Lower leg skin (tissue), 4 donors: ENCODE measurements at regions of chr11 and their contacts with region 1.

Region 1: GRCh38 chr11:23976841-23977271 is 520.0 kb upstream of the LUZP2 start:
- DNase-seq: no peak
- H3K4me3 ChIP-seq: no peak overlapping the region
- CTCF ChIP-seq: no peak
- POLR2A ChIP-seq: no peak

Region 2: DNA sequence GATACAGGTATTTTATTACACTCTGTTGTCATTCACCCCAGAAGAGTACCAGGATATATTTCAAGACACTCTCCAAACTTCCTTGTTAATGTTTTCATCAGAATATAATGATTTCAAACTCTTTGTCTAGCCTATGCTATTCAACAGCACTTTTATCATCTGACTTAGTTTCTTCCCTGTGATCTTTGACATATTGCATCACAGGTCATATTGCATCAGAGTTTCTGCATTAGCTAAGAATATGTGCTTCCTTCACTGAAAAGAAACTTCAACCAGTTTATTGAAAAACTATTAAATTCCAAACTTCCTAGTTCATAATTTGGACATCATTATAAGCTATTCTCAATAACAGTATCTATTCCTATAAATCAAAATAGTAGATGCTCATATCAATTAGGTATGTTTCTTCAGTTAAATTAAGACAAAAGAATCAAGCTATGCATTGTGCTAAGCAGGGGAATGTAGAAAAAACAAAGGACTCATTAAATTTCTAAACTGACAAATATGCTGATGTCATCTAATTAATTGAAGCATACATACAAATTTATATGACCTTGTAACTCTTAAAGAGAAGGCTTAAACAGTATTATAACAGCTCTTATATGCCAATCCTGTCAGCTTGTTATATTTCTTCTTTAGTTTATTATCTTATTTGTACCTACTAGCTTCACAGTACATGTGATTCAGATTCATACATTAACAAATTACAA is 158.2 kb after region 1 on chr11:
- intact Hi-C with region 1: no loop called
- DNase-seq: no peak
- H3K4me3 ChIP-seq: no peak overlapping the region
- CTCF ChIP-seq: no peak
- POLR2A ChIP-seq: no peak

Region 3: GRCh38 chr11:24240496-24241175 is 263.8 kb after region 1 on chr11:
- intact Hi-C with region 1: loop called (anchors 5 kb)
- DNase-seq: no peak
- H3K4me3 ChIP-seq: no peak overlapping the region
- CTCF ChIP-seq: no peak
- POLR2A ChIP-seq: no peak